ENCODE measurements at regions of chr3 and their contacts with region 1.

Region 1: GRCh38 chr3:126679318-126679751 is 24.4 kb upstream of the TXNRD3 start:
- DNase-seq: peak; percentile 82 to 88
- ATAC-seq: peak; percentile 92 to 98 (median 94)
- H3K4me3 ChIP-seq: no peak overlapping the region
- H3K27ac ChIP-seq: no peak overlapping the region
- H3K4me1 ChIP-seq: no peaks in the 10 kb centered on the region
- H3K27me3 ChIP-seq: no peaks in the 10 kb centered on the region
- CTCF ChIP-seq: peak; percentile 98

Region 2: GRCh38 chr3:126746395-126747177 is 67.3 kb after region 1 on chr3:
- intact Hi-C with region 1: loop called (anchors 5 kb)
- DNase-seq: no peak
- ATAC-seq: peak; percentile 89 to 95 (median 92)
- H3K4me3 ChIP-seq: peak overlapping the region; percentile 28
- H3K27ac ChIP-seq: peak overlapping the region; percentile 70
- H3K4me1 ChIP-seq: peaks cover 22% of the 10 kb centered on the region
- H3K27me3 ChIP-seq: no peaks in the 10 kb centered on the region
- CTCF ChIP-seq: peak; percentile 8

Region 3: DNA sequence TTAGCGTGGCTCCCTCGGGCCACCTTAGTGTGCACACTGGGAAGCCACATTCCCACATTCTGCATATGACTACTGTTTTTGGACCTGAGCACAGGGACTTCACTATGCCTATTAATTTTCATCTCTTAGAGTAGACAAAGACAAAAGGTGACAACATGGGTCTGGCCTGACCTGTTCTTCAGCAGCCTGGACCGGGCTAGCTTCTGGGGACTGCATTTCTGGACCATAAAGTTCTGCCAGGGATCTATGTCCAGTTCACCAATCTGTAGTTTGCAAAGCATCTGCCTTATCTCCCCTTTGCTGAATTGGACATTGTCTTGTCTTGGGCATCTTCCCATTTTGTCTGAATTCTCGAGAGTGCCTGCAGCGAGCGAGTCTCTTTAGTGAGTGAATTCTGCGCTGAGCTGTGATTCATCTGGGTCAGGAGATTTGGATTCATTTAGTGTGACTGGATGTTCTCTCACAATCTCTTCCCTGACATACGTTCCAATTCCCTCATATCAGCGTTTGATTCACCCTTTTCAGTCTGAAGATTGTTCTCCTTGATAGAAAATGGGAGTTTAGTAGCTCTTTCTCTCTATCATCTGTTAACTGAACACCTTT is 191.4 kb after region 1 on chr3:
- intact Hi-C with region 1: no loop called
- DNase-seq: no peak
- ATAC-seq: no peak
- H3K4me3 ChIP-seq: no peak overlapping the region
- H3K27ac ChIP-seq: no peak overlapping the region
- H3K4me1 ChIP-seq: peaks cover 17% of the 10 kb centered on the region
- H3K27me3 ChIP-seq: no peaks in the 10 kb centered on the region
- CTCF ChIP-seq: no peak

Region 4: GRCh38 chr3:126982471-126983175 is 303.3 kb after region 1 on chr3 and contains the start of gene PLXNA1:
- intact Hi-C with region 1: loop called in 1 of 2 experiments (anchors 2 kb)
- DNase-seq: peak; percentile 84 to 88
- ATAC-seq: peak; percentile 85 to 92 (median 89)
- H3K4me3 ChIP-seq: peak within 1 kb of the TSS; percentile 80
- H3K27ac ChIP-seq: peak within 1 kb of the TSS; percentile 62
- H3K4me1 ChIP-seq: peaks cover 11% of the 10 kb centered on the region
- H3K27me3 ChIP-seq: no peaks in the 10 kb centered on the region
- CTCF ChIP-seq: peak; percentile 75
- total RNA-seq, gene PLXNA1: 14.7 to 20.1 (median 15.7) TPM

Region 5: GRCh38 chr3:127182471-127183367 is 503.4 kb after region 1 on chr3:
- intact Hi-C with region 1: loop called in 1 of 2 experiments (anchors 5 kb)
- DNase-seq: no peak
- ATAC-seq: no peak
- H3K4me3 ChIP-seq: no peak overlapping the region
- H3K27ac ChIP-seq: no peak overlapping the region
- H3K4me1 ChIP-seq: no peaks in the 10 kb centered on the region
- H3K27me3 ChIP-seq: no peaks in the 10 kb centered on the region
- CTCF ChIP-seq: no peak

Region 6: DNA sequence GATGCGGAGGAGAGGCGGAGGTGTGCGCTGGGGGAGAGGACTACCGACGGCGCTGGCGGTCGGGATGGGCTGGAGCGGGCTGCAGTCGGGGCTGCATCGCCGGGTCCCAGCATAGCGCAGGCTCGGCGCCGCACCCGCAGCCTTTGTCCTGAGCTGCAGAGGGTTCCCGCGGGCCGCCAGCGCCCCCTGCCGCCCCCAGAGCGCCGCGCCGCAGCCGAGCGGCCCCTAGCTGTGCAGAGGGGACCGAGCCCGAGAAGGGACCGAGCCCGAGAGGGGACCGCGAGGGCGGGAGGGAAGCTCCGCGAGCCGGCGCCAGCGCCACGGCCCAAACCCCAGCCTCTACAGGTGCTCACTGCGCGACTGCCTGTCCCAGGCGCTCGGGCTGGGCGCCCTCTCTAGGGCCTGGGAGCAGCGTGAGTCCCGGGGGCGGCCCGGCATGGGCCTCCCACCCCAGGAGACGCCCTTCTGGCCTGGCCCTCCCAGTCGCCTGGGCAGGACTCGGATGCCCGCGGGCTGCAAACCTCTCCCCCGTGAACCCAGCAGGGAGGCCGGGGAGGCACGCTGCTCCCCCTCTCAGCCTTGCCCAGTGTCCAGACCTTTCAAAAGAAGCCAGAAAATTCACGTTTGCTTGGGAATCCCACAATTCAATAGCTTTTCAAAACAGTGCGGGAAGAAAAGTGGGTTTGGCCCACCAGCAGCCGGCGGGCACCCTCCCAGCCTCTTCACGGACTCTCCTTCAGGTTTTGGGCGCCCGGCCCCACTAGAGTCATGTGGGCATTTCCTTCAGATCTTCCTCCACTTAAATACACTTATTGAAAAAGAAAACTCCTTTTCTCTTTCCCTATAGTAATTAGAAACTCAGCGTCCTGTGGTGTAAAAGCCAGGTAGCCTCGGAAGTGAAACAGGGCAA is 776.5 kb after region 1 on chr3:
- intact Hi-C with region 1: loop called in 1 of 2 experiments (anchors 1 kb)
- DNase-seq: peak; percentile 76 to 82
- ATAC-seq: peak; percentile 87 to 93 (median 89)
- H3K4me3 ChIP-seq: peak overlapping the region; percentile 52
- H3K27ac ChIP-seq: no peak overlapping the region
- H3K4me1 ChIP-seq: peaks cover 5% of the 10 kb centered on the region
- H3K27me3 ChIP-seq: peaks cover 0 to 57% (median 20%) of the 10 kb centered on the region in 3 donors
- CTCF ChIP-seq: peak; percentile 84

Region 7: GRCh38 chr3:127535901-127536829 is 856.8 kb after region 1 on chr3:
- intact Hi-C with region 1: loop called in 1 of 2 experiments (anchors 5 kb)
- DNase-seq: no peak
- ATAC-seq: no peak
- H3K4me3 ChIP-seq: no peak overlapping the region
- H3K27ac ChIP-seq: no peak overlapping the region
- H3K4me1 ChIP-seq: no peaks in the 10 kb centered on the region
- H3K27me3 ChIP-seq: no peaks in the 10 kb centered on the region
- CTCF ChIP-seq: no peak

Region 8: GRCh38 chr3:127544192-127544802 is 865.0 kb after region 1 on chr3:
- intact Hi-C with region 1: loop called (anchors 5 kb)
- DNase-seq: peak; percentile 69 to 84
- ATAC-seq: peak; percentile 42 to 69 (median 58)
- H3K4me3 ChIP-seq: no peak overlapping the region
- H3K27ac ChIP-seq: no peak overlapping the region
- H3K4me1 ChIP-seq: no peaks in the 10 kb centered on the region
- H3K27me3 ChIP-seq: no peaks in the 10 kb centered on the region
- CTCF ChIP-seq: peak; percentile 74

Measured in psoas muscle (tissue), 8 donors.